Cardiac septum (tissue), 1 donor: ENCODE measurements at regions of chr13 and their contacts with region 1.

Region 1: GRCh38 chr13:111474136-111475002 is 153.9 kb downstream of the TEX29 start:
- DNase-seq: no peak

Region 2: DNA sequence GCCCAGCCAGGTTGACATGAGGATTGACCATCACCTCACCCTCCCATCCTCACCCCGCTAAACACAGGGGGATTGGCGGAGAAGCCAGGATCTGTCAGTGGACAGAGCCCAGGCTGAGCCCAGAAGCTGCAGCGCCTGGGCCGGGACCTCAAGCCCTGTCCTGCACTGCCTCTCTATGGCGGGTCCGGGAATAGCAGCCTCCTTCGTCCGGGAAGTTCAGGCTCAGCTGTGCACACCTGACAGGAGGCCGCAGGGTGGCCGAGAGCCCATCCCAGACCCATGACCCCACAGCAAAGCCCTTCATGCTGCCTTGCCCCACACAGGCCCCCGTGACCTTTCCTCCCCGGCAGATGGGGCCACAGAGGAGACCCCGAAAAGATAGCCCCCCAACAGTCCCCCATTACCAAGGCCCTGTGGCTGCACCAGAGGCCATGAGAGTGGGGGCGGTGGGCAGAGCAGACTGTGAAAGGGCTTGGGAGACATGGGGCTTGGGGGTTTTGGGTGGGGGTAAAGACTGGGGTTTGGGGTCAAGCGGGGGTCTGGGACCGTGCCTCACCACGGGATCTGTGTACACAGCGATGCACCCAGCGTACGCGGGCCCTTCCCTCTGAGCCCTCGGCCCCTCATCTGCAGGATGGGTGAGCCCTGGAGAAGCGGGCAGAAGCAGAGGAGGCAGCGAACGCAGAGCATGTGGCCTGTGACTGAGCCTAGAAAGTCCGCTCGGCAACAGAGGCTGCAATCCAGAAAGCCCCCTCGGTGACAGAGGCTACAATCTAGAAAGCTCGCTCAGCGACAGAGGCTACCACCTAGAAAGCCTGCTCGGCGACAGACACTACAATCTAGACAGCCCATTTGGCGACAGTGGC is 969.9 kb after region 1 on chr13:
- intact Hi-C with region 1: loop called (anchors 2 kb)
- DNase-seq: peak; percentile 70